MCF 10A (cell line): ENCODE measurements at regions of chr1 and their contacts with region 1.

Region 1: DNA sequence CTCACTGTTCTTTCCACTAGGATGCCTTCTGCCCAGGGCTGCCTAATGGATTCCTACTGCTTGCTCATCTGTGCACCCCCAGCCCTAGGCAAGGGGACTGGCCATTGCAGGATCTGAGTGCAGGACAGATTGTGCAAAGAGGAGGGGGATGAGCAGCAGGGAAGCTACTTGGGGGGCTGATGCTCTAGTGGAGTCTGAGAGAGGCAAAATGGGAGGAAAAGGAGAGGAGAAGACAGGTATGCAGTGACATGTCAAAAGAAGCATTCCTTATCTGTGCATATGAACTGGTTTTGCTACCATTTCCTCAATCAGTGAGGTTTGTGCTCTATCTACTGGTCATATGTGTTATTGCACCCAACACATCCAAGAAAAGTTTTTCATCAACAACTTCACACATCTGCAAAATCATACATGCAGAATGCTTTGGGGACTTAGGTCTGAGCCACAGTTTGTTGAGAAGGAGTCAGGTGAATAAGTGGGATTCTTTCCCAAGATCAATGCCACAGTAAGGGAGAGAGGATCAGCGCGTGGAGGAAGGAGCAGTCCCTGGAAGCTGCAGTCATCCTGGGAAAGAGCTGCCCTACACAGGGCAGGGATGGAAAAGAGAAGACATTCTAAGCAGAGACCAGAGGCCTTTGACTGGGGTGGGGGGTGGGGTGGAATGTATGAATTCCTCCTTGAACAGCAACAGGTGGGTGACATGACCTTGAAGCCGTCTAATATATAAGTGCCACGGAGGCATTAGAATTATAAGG is 14.4 kb downstream of the SLC5A9 start:
- DNase-seq: peak; percentile 43
- H3K4me3 Mint-ChIP-seq: no peak overlapping the region
- H3K27ac Mint-ChIP-seq: no peak overlapping the region
- H3K4me1 Mint-ChIP-seq: no peaks in the 10 kb centered on the region
- H3K27me3 Mint-ChIP-seq: no peaks in the 10 kb centered on the region
- CTCF ChIP-seq: peak; percentile 74

Region 2: GRCh38 chr1:47388891-47389238 is 848.0 kb before region 1 on chr1:
- CTCF ChIA-PET with region 1: no interaction called
- POLR2A ChIA-PET with region 1: no interaction called
- intact Hi-C with region 1: loop called (anchors 5 kb)
- DNase-seq: peak; percentile 81
- H3K4me3 Mint-ChIP-seq: no peak overlapping the region
- H3K27ac Mint-ChIP-seq: no peak overlapping the region
- H3K4me1 Mint-ChIP-seq: no peaks in the 10 kb centered on the region
- H3K27me3 Mint-ChIP-seq: no peaks in the 10 kb centered on the region
- CTCF ChIP-seq: peak; percentile 94

Region 3: GRCh38 chr1:48077795-48078222 is 159.1 kb before region 1 on chr1:
- CTCF ChIA-PET with region 1: interaction called, 14 read pairs
- POLR2A ChIA-PET with region 1: no interaction called
- intact Hi-C with region 1: no loop called
- DNase-seq: no peak
- H3K4me3 Mint-ChIP-seq: no peak overlapping the region
- H3K27ac Mint-ChIP-seq: no peak overlapping the region
- H3K4me1 Mint-ChIP-seq: no peaks in the 10 kb centered on the region
- H3K27me3 Mint-ChIP-seq: no peaks in the 10 kb centered on the region
- CTCF ChIP-seq: no peak

Region 4: DNA sequence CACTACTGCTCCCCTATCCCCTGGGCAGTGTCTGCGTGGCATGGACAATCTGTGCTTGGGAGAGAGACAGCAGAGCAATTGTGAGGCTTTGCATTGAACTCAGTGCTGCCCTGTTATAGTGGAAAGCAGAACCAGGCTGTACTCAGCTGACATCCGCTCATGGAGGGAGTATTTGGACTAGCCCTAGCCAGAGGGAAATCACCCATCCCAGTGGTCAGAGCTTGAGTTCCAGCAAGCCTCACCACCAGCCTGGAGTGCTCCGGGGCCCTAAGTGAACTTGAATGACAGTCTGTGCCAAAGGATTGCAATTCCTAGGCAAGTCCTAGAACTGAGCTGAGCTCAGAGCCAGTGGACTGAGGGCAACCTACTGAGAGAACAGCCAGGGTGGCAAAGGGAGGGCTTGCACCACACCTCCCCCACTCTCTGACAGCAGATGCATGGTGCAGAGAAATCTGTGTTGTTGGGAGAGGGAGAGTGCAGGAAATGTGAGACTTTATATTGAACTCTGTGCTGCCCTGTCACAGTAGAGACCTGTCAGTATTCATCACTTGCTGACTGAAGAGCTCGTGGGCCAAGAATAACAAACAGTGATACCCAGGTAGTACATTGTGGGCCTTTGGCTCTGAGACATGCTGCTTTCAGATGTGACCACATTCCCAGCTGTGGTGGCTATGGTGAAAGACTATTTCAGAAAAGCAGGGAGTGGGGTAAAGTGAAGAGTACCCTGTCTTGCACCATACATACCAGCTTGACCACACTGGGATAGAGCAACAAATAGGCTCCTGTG is 122.1 kb before region 1 on chr1:
- CTCF ChIA-PET with region 1: interaction called, 85 read pairs
- POLR2A ChIA-PET with region 1: interaction called, 3 read pairs
- intact Hi-C with region 1: loop called (anchors 1 kb)
- DNase-seq: peak; percentile 82
- H3K4me3 Mint-ChIP-seq: no peak overlapping the region
- H3K27ac Mint-ChIP-seq: peak overlapping the region; percentile 93
- H3K4me1 Mint-ChIP-seq: peaks cover 45% of the 10 kb centered on the region
- H3K27me3 Mint-ChIP-seq: no peaks in the 10 kb centered on the region
- CTCF ChIP-seq: no peak

Region 5: GRCh38 chr1:48139275-48139674 is 97.6 kb before region 1 on chr1:
- CTCF ChIA-PET with region 1: no interaction called
- POLR2A ChIA-PET with region 1: no interaction called
- intact Hi-C with region 1: no loop called
- DNase-seq: no peak
- H3K4me3 Mint-ChIP-seq: no peak overlapping the region
- H3K27ac Mint-ChIP-seq: no peak overlapping the region
- H3K4me1 Mint-ChIP-seq: peaks cover 6% of the 10 kb centered on the region
- H3K27me3 Mint-ChIP-seq: no peaks in the 10 kb centered on the region
- CTCF ChIP-seq: no peak

Region 6: DNA sequence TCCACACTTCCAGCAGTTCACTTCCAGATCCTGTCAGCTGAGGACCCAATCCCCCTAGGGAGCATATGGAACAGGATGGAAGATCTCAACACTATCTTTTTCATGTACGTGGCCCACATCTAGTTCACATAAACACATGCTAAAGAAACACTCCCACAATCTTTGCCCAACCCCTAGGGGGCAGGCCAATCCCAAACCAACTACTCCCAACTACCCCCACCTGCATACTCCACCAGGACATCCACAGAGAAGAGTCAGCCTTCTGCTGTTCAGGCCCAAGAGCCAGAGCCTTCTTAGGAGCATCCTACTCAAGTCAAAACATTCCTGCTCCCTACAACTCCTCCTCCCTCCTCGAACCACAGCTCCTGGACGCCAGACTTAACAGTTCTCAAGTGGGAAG is 20.0 kb before region 1 on chr1:
- CTCF ChIA-PET with region 1: interaction called, 16 read pairs
- POLR2A ChIA-PET with region 1: no interaction called
- intact Hi-C with region 1: no loop called
- DNase-seq: no peak
- H3K4me3 Mint-ChIP-seq: no peak overlapping the region
- H3K27ac Mint-ChIP-seq: no peak overlapping the region
- H3K4me1 Mint-ChIP-seq: peaks cover 13% of the 10 kb centered on the region
- H3K27me3 Mint-ChIP-seq: no peaks in the 10 kb centered on the region
- CTCF ChIP-seq: no peak

Region 7: DNA sequence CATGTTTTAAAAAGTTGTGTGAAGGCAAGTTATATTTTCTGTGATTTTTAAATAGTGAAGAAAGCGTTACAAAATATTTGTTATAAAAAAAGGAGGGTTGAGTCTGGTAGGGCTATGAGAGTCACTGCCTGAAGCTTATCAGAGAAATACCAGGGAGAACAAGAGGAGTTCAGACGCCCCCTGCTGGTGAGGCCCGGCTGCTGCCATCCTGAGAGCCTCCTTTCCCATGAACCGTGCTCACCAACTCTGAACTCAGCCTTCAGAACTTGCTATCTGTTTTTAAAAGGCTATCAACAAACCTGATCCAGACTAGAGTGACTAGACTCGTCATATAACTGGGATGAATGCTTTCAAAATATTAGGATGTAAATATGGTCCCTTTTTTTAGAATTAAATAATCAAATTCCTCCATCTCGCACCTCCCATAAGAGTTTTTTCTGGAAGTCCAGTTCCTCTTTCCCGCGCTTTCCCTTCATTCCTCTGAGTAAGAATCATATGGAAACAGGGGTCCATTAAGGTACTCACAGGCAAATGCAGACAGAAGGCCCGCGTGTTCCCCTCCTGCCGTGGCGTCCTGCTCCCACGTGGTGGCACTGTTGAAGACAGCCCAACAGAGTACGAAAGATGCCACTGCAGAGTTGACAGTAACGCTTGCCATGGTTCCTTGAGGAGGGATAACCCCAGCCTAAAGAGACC is 261.4 kb after region 1 on chr1:
- CTCF ChIA-PET with region 1: interaction called, 7 read pairs
- POLR2A ChIA-PET with region 1: no interaction called
- intact Hi-C with region 1: loop called (anchors 1 kb)
- DNase-seq: peak; percentile 73
- H3K4me3 Mint-ChIP-seq: no peak overlapping the region
- H3K27ac Mint-ChIP-seq: no peak overlapping the region
- H3K4me1 Mint-ChIP-seq: peaks cover 18% of the 10 kb centered on the region
- H3K27me3 Mint-ChIP-seq: no peaks in the 10 kb centered on the region
- CTCF ChIP-seq: peak; percentile 78